Posterior cingulate gyrus (tissue), 11 donors: ENCODE measurements at regions of chr16 and their contacts with region 1.

Region 1: GRCh38 chr16:81595604-81596292 is 151.1 kb downstream of the CMIP start:
- DNase-seq: peak in 1 of 10 donors; percentile 22

Region 2: DNA sequence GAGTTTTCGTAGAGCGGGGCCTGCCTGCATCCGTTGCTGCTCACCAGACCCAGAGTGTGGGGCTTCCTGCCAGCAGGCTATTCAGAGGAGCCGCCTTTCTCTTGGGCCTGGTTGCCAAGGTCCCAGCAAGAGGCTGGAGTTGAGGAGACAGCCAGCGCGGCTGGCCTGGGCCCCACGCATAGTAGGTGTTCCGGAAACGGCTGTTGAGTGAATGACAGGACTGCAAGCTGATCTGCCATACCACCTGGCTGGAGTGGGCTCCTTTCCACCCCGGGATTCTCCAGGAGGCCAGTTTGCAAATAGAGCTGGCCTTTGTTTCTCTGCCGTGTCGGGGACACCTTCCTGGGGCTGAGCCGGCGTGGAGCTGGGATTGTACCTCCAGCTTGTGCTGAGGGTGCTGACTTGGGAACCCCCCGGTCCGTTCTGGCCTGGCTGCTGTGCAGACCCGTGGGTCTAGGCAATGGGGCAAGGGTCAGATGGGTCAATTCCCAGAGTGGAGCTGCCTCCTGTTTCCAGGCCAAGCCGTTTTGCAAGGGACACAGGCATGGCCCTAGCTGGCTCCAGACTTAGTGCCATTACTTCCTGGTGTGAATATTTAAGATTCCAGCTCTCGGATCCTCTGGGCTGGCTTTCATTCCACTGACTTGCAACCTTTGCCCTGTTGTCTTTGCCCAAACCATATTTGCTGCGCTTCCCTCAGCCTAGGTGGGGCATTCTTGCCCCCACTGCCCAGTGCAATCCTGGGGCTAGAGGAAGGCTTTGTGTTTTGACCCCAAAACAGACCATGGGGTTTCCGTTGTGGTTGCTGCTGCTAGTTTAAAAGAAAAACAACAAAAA is 82.3 kb before region 1 on chr16:
- intact Hi-C with region 1: no loop called
- DNase-seq: peak in 7 of 10 donors; percentile 44 to 92 (median 57)

Region 3: DNA sequence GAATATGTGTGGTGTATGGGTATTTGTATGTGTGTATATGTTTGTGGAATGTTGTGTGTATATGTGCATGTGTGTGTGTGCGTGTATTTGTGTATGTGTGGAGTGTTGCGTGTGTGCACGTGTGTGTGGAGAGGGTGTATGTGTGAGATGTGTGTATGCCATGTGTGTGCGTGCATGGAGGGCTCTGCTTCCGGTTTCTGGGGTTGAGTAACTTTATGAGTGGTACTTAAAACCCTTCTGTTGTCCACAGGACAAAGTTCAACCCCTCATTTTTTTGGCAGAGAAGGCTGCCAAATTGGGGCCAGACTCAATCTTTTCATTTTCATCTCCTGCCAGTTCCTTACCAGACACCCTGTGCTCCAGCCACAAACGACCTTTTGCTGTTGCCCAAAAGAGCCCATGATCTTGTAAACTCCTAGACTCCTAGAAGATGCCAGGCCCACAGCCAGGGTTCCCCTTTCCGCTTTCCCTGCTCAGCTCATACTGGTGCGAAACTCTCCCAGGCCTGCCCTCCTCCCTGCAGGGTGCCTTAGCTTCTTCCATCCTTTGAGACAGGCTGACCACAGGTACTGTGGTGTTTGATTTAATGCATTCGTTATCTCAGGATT is 51.0 kb before region 1 on chr16:
- intact Hi-C with region 1: loop called (anchors 10 kb)
- DNase-seq: peak in 1 of 10 donors; percentile 34